HEK293 (cell line): ENCODE measurements at regions of chr11 and their contacts with region 1.

Region 1: GRCh38 chr11:102614485-102614884 is 10.6 kb downstream of the MMP20 start:
- H3K4me3 ChIP-seq: no peak overlapping the region
- H3K27ac ChIP-seq: no peak overlapping the region
- H3K4me1 ChIP-seq: no peaks in the 10 kb centered on the region; the same call in 1 of the 2 replicates
- CTCF ChIP-seq: no peak

Region 2: GRCh38 chr11:102287964-102288724 is 326.3 kb before region 1 on chr11:
- CTCF ChIA-PET with region 1: interaction called, 20 read pairs
- POLR2A ChIA-PET with region 1: no interaction called
- H3K4me3 ChIP-seq: no peak overlapping the region
- H3K27ac ChIP-seq: no peak overlapping the region
- H3K4me1 ChIP-seq: no peaks in the 10 kb centered on the region
- CTCF ChIP-seq: peak; percentile 42; the same call in 1 of the 2 replicates

Region 3: GRCh38 chr11:102495161-102496042 is 119.1 kb before region 1 on chr11:
- CTCF ChIA-PET with region 1: interaction called, 24 read pairs
- POLR2A ChIA-PET with region 1: no interaction called
- H3K4me3 ChIP-seq: no peak overlapping the region
- H3K27ac ChIP-seq: no peak overlapping the region
- H3K4me1 ChIP-seq: no peaks in the 10 kb centered on the region
- CTCF ChIP-seq: no peak

Region 4: DNA sequence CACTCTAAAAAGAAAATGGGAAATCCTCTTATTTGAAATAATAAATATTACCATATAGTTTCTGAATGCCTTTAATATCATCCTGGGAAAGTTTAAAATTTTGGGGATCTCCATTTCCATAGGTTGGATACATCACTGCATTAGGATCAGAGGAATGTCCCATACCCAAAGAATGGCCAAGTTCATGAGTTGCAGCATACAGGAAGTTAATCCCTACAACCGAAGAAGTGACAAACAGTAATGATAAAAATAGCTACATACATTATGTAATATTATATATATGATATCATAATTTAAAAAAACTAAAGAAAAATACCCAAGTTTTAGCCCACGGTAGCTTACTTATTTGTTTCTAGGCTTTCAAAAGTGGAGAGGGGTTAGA is 91.3 kb before region 1 on chr11:
- CTCF ChIA-PET with region 1: interaction called, 14 read pairs
- POLR2A ChIA-PET with region 1: no interaction called
- H3K4me3 ChIP-seq: no peak overlapping the region
- H3K27ac ChIP-seq: no peak overlapping the region
- H3K4me1 ChIP-seq: no peaks in the 10 kb centered on the region
- CTCF ChIP-seq: no peak

Region 5: DNA sequence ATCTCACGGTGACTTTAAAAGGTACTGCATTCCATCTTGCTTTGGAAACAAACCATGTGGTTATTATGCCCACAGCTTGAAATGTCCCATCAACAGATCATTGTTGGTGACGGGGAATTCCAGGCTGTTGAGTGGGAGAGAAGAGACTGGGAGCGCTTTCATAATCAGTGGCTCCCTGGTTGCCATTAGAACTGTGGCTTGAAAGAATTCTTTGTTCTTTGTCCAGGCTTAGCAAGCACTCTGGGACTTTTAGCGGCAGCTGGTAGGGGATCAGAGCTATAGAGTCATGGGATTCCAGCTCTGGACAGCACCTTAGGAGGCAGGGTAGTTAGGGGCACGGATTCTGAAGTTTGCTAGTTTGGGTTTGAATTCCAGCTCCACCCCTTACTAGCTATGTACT is 11.4 kb before region 1 on chr11:
- CTCF ChIA-PET with region 1: interaction called, 15 read pairs
- POLR2A ChIA-PET with region 1: no interaction called
- H3K4me3 ChIP-seq: no peak overlapping the region
- H3K27ac ChIP-seq: no peak overlapping the region
- H3K4me1 ChIP-seq: no peaks in the 10 kb centered on the region
- CTCF ChIP-seq: no peak

Region 6: GRCh38 chr11:102666331-102666957 is 52.0 kb after region 1 on chr11:
- CTCF ChIA-PET with region 1: interaction called, 43 read pairs
- POLR2A ChIA-PET with region 1: no interaction called
- H3K4me3 ChIP-seq: no peak overlapping the region
- H3K27ac ChIP-seq: no peak overlapping the region
- H3K4me1 ChIP-seq: no peaks in the 10 kb centered on the region
- CTCF ChIP-seq: peak; percentile 30; the same call in 1 of the 2 replicates

Region 7: DNA sequence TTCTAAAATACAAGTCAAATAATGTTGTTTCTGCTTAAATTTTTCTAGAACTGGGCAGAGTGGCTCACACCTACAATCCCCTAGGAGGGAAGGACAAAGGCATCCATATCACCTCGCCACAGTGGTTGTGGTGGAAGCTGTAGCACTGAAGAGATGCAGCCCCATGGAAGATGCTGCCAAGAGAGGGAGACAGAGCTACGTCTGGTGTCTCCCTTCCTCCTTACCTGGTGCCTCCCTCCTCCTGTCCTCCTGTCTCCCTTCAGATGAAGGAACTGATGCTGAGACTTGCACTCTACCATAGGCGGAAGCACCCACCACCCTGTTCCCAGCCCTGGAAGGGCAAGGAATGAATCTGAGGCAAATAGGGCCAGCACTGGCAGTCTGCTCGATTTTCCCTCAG is 68.8 kb after region 1 on chr11:
- CTCF ChIA-PET with region 1: no interaction called
- POLR2A ChIA-PET with region 1: no interaction called
- H3K4me3 ChIP-seq: no peak overlapping the region
- H3K27ac ChIP-seq: no peak overlapping the region
- H3K4me1 ChIP-seq: no peaks in the 10 kb centered on the region
- CTCF ChIP-seq: no peak